Activated CD4-positive, alpha-beta memory T cell treated with anti-CD3 and anti-CD28 coated beads, Interleukin-2, amount 10 ng/mL, durations not matched to agents 7 days and 5 days (primary cell): ENCODE measurements at regions of chr10 and their contacts with region 1.

Region 1: GRCh38 chr10:27155066-27155754 is at the start of gene MASTL:
- DNase-seq: peak; percentile 95
- H3K4me3 Mint-ChIP-seq: peak within 1 kb of the TSS; percentile 92
- H3K27ac Mint-ChIP-seq: peak within 1 kb of the TSS; percentile 100
- H3K4me1 Mint-ChIP-seq: peaks cover 47% of the 10 kb centered on the region
- H3K27me3 Mint-ChIP-seq: no peaks in the 10 kb centered on the region
- total RNA-seq, gene MASTL: 38.0 to 40.1 TPM

Region 2: GRCh38 chr10:26697163-26697921 is 457.9 kb before region 1 on chr10 and contains the start of gene PDSS1:
- CTCF ChIA-PET with region 1: interaction called, 3 read pairs
- POLR2A ChIA-PET with region 1: interaction called, 14 read pairs
- DNase-seq: peak; percentile 71
- H3K4me3 Mint-ChIP-seq: peak within 1 kb of the TSS; percentile 95
- H3K27ac Mint-ChIP-seq: peak within 1 kb of the TSS; percentile 94
- H3K4me1 Mint-ChIP-seq: peaks cover 37% of the 10 kb centered on the region
- H3K27me3 Mint-ChIP-seq: no peaks in the 10 kb centered on the region
- total RNA-seq, gene PDSS1: 10.7 to 12.9 TPM

Region 3: DNA sequence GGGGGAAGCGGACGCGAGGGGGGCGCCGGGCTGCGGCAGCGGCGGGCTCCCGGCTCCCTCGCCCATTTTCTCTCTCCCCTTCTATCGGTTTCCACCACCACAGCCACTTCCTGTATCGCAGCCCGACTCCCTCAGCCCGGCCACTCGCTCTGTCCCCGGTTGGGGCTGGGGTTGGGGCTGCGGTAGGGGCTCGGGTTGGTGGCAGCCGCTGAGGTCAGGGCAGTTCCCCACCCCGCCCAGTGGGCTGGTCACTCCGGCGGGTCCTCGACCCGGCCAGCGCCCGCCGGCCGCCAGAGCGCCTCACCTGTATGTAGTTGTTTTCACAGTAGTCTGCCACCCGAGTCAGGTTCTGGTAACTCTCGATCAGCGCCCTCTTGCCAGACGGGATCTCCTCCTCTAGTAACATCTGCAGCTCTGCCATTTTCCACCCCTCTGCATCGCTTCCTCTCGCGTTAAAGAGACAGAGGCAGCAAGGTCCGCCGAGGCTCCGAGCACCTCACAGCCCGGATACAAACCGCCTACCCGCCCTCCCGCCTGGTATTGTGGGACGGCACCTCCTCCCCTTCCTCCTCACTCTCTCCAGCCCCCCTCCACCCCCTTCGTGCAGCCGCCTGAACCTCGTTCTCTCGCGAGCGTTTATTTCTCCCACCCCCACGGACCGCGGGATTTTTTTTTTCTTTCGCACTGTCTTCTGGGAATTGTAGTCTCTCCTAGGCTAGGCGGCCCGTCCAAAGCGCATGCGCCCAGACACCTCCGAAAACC is 294.6 kb before region 1 on chr10 and contains the start of gene ABI1:
- CTCF ChIA-PET with region 1: interaction called, 4 read pairs
- POLR2A ChIA-PET with region 1: interaction called, 28 read pairs
- DNase-seq: peak; percentile 98
- H3K4me3 Mint-ChIP-seq: peak within 1 kb of the TSS; percentile 100
- H3K27ac Mint-ChIP-seq: peak within 1 kb of the TSS; percentile 100
- H3K4me1 Mint-ChIP-seq: peaks cover 30% of the 10 kb centered on the region
- H3K27me3 Mint-ChIP-seq: peaks cover 11% of the 10 kb centered on the region
- total RNA-seq, gene ABI1: 76.9 to 78.4 TPM

Region 4: DNA sequence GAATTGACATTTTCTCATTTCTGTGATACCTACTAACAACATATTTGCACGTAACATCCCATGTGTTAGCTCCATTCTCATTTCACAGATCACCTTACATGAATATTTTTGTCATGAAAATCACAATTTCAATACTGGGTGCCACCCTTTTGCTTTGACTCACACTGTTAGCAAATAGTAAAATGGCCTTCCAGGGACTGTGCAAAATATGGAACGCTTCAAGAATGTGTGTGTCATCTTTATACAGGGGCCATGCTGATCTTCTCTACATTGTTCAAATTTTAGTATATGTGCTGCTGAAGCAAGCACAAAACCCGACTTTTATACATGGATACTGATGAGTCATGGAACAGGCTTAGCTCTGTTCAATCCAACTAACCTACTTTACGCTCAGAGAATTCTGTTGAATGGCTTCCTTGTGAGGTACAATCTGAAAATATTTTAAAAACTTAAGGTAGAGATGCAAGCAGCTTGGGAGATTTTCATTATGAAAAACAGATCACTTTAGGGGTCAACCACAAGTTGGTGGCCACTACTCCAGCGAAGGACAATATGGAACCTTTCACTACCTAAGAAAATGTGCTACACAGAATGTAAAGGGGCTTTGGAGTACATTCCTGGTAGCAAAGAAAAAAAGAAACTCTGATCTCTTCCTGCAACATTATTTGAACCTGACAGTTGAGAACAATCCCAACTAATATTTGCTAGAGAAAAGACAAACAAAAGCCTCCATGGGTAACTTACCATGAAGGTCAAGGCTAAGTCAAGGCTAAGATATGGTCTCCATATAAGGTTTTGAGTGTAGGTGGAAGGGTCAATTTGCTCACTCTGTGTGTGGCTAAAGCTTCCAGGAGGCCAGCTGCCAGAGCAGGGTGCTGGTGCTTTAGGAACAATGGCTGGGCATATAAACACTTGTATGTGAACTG is 66.8 kb before region 1 on chr10:
- CTCF ChIA-PET with region 1: no interaction called
- POLR2A ChIA-PET with region 1: no interaction called
- DNase-seq: no peak
- H3K4me3 Mint-ChIP-seq: no peak overlapping the region
- H3K27ac Mint-ChIP-seq: no peak overlapping the region
- H3K4me1 Mint-ChIP-seq: no peaks in the 10 kb centered on the region
- H3K27me3 Mint-ChIP-seq: no peaks in the 10 kb centered on the region

Region 5: DNA sequence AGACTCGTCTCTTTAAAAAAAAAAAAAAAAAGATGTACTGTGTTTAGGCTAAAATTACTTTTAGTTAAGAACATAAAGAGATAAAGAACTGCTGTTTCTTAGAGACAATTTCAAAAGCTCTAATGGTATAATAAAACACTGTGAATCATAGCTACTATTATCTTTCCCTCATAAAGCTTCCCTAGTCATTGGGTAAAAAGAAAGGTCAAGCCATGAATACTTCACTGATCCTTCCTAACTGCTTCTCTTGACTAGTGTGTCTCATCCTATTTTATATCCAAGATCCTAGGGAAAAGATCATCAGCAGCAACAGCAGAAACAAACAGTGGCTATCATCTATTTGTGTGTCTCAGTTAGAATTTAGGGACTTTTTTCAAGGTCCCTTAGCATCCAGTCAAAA is 11.5 kb before region 1 on chr10:
- CTCF ChIA-PET with region 1: interaction called, 12 read pairs
- POLR2A ChIA-PET with region 1: interaction called, 77 read pairs
- DNase-seq: no peak
- H3K4me3 Mint-ChIP-seq: no peak overlapping the region
- H3K27ac Mint-ChIP-seq: no peak overlapping the region
- H3K4me1 Mint-ChIP-seq: peaks cover 21% of the 10 kb centered on the region
- H3K27me3 Mint-ChIP-seq: no peaks in the 10 kb centered on the region

Region 6: GRCh38 chr10:27207350-27207749 is 52.1 kb after region 1 on chr10:
- CTCF ChIA-PET with region 1: no interaction called
- POLR2A ChIA-PET with region 1: no interaction called
- DNase-seq: no peak
- H3K4me3 Mint-ChIP-seq: no peak overlapping the region
- H3K27ac Mint-ChIP-seq: no peak overlapping the region
- H3K4me1 Mint-ChIP-seq: no peaks in the 10 kb centered on the region
- H3K27me3 Mint-ChIP-seq: no peaks in the 10 kb centered on the region

Region 7: GRCh38 chr10:27241652-27242472 is 86.7 kb after region 1 on chr10:
- CTCF ChIA-PET with region 1: interaction called, 5 read pairs
- POLR2A ChIA-PET with region 1: interaction called, 80 read pairs
- DNase-seq: peak; percentile 90
- H3K4me3 Mint-ChIP-seq: peak overlapping the region; percentile 89
- H3K27ac Mint-ChIP-seq: peak overlapping the region; percentile 98
- H3K4me1 Mint-ChIP-seq: peaks cover 34% of the 10 kb centered on the region
- H3K27me3 Mint-ChIP-seq: no peaks in the 10 kb centered on the region

Region 8: GRCh38 chr10:27504007-27504807 is 349.0 kb after region 1 on chr10 and contains the start of gene RAB18:
- CTCF ChIA-PET with region 1: no interaction called
- POLR2A ChIA-PET with region 1: interaction called, 14 read pairs
- DNase-seq: peak; percentile 98
- H3K4me3 Mint-ChIP-seq: peak within 1 kb of the TSS; percentile 98
- H3K27ac Mint-ChIP-seq: peak within 1 kb of the TSS; percentile 94
- H3K4me1 Mint-ChIP-seq: peaks cover 46% of the 10 kb centered on the region
- H3K27me3 Mint-ChIP-seq: no peaks in the 10 kb centered on the region
- total RNA-seq, gene RAB18: 69.5 to 72.0 TPM